GM12878 (cell line): ENCODE measurements at regions of chr10 and their contacts with region 1.

Region 1: DNA sequence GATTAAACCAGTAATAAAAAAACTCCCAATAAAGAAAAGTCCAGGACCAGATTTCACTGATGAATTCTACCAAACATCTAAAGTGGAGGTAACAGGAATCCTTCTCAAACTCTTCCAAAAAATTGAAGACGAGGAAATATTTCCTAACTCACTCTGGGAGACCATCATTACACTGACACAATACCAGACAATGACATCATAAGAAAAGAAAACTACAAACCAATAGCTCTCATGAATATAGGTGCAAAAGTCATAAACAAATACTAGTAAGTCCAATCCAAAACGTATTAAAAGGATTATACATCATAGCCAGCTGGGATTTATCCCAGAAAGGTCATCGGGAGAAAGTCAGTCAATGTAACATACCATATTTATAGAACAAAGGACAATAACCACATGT is 94.0 kb upstream of the RAB18 start:
- DNase-seq: no peak
- ATAC-seq: no peak
- H3K4me3 ChIP-seq: no peak overlapping the region
- H3K27ac ChIP-seq: no peak overlapping the region
- H3K4me1 ChIP-seq: no peaks in the 10 kb centered on the region
- H3K27me3 ChIP-seq: no peaks in the 10 kb centered on the region
- CTCF ChIP-seq: no peak
- EP300 ChIP-seq: no peak
- POLR2A ChIP-seq: no peak
- RAD21 ChIP-seq: no peak

Region 2: DNA sequence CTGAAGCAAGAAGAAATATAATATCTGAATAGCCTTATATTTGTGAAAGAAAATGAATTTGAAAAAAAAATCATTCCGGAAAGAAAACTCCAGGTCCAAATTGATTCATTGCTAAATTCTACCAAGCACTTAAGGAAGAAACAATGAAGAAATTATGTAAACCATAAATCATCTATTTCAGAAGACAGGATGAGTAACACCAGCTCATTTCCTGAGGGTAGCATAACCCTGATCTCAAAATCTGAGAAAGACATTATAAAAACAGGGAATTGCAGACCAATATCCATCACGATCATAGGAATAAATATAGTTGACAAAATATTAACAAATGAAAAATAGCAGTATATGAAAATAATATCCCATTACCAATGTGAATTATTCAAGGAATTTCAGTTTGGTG is 23.8 kb after region 1 on chr10:
- CTCF ChIA-PET with region 1: no interaction called
- POLR2A ChIA-PET with region 1: no interaction called
- RAD21 ChIA-PET with region 1: no interaction called
- SMC1A ChIA-PET with region 1: no interaction called
- in situ Hi-C with region 1: no loop called
- intact Hi-C with region 1: no loop called
- DNase-seq: no peak
- ATAC-seq: no peak
- H3K4me3 ChIP-seq: no peak overlapping the region
- H3K27ac ChIP-seq: no peak overlapping the region
- H3K4me1 ChIP-seq: no peaks in the 10 kb centered on the region
- H3K27me3 ChIP-seq: no peaks in the 10 kb centered on the region
- CTCF ChIP-seq: no peak
- EP300 ChIP-seq: no peak
- POLR2A ChIP-seq: no peak
- RAD21 ChIP-seq: no peak

Region 3: DNA sequence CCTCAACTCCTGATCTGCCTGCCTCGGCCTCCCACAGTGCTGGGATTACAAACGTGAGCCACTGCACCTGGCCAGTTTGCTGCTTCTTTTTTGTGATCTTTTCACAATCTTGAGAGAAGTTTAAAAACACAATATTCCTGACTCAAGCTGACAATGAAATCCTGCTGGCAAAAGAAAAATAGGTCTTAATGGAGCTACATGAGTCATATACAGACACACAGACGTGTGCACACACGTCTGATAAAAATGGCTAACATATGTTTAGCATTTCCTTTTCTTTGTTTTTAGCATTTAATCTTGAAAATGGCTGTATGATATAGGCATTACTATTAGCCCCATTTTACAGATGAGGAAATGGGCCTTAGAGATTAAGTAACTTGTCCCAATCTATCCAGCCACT is 64.6 kb after region 1 on chr10:
- CTCF ChIA-PET with region 1: no interaction called
- POLR2A ChIA-PET with region 1: interaction called, 11 read pairs
- RAD21 ChIA-PET with region 1: no interaction called
- SMC1A ChIA-PET with region 1: no interaction called
- in situ Hi-C with region 1: no loop called
- intact Hi-C with region 1: no loop called
- DNase-seq: no peak
- ATAC-seq: no peak
- H3K4me3 ChIP-seq: no peak overlapping the region
- H3K27ac ChIP-seq: no peak overlapping the region
- H3K4me1 ChIP-seq: no peaks in the 10 kb centered on the region
- H3K27me3 ChIP-seq: no peaks in the 10 kb centered on the region; a peak in 3 of 4 replicates
- CTCF ChIP-seq: no peak
- EP300 ChIP-seq: no peak
- POLR2A ChIP-seq: no peak
- RAD21 ChIP-seq: no peak